ENCODE measurements at regions of chr7 and their contacts with region 1.

Region 1: DNA sequence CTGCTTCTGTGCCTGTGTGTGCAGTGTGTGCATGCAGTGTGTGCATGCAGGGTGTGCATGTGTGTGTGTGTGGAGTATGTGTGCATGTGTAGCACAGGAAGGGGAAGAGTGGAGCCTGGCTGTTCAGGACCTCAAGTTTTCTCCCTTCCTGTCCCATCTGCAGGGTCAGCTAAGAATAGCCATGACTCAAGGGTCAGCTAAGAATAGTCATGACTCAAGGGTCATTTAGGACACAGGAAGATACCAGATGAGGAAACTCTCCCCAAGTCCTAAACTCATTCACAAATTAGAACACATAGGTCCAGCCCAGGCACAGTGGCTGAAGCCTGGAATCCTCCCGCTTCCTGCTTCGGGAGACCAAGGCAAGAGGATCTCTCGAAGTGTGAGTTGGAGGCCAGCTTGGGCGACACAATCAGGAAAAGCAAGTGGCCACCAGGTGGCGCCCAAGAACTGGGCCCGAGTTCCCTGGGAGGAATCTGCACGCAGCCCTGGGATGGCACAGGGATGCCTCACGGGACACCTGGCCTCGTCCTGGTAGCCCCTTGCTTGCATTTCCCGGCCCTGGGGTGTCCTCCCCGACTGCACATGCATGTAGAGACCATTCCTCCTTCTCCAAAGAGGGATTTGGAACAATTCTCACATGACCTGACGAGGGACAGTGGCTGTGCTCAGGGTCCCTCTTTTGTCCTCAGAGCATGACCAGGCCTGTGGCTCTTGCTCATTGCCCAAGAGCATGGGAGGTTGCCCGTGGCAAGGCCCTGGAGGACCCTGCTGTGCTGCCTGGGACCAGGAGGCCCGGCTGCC is 21.4 kb upstream of the VOPP1 start:
- DNase-seq: peak; percentile 92
- H3K4me3 Mint-ChIP-seq: no peak overlapping the region
- H3K27ac Mint-ChIP-seq: no peak overlapping the region
- H3K4me1 Mint-ChIP-seq: no peaks in the 10 kb centered on the region
- H3K27me3 Mint-ChIP-seq: peaks cover 62% of the 10 kb centered on the region
- CTCF ChIP-seq: peak; percentile 96

Region 2: GRCh38 chr7:55280031-55280454 is 313.7 kb before region 1 on chr7:
- CTCF ChIA-PET with region 1: no interaction called
- intact Hi-C with region 1: loop called (anchors 1 kb)
- DNase-seq: peak; percentile 84
- H3K4me3 Mint-ChIP-seq: no peak overlapping the region
- H3K27ac Mint-ChIP-seq: no peak overlapping the region
- H3K4me1 Mint-ChIP-seq: no peaks in the 10 kb centered on the region
- H3K27me3 Mint-ChIP-seq: peaks cover 64% of the 10 kb centered on the region
- CTCF ChIP-seq: peak; percentile 89

Region 3: DNA sequence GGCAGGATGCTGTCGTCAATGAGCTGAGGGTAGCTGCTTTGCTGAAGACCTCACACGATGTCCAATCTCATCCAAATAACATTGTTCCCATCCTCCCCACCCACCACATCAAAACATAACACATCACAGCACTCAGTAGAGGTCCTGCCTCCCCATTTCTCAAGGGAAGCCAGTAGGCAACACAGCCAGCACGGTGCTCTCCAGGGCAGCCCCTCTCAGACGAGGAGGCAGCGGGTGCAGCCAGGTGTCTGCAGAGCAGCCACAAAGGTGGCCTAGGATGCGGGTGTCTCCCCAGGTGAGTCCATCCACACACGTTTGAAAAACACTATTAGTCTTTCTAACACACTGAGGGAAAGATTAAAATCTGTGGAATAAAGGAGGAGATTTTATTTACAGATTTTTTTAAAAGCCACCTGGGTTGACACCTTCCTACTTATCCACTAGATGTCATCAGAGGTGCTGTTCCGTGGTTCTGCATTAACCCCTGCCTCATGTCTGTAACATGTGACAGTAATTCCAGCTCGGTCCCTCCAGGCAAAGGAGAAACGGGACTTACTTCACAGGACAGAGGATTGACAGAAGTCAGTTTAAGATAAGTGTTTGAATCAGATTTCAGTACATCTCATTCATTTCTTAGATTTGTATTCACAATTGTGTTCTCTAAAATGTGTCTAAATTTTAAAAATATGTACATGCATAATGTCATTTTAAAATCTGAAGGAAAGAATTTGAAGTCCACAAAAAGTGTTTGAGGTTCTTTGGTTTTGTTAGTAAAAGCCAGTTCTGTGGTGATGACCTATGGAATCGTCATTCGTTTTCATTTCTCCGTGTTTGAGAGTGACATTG is 160.6 kb before region 1 on chr7:
- CTCF ChIA-PET with region 1: interaction called, 5 read pairs
- intact Hi-C with region 1: loop called (anchors 1 kb)
- DNase-seq: peak; percentile 51
- H3K4me3 Mint-ChIP-seq: no peak overlapping the region
- H3K27ac Mint-ChIP-seq: no peak overlapping the region
- H3K4me1 Mint-ChIP-seq: no peaks in the 10 kb centered on the region
- H3K27me3 Mint-ChIP-seq: no peaks in the 10 kb centered on the region
- CTCF ChIP-seq: peak; percentile 51

Region 4: DNA sequence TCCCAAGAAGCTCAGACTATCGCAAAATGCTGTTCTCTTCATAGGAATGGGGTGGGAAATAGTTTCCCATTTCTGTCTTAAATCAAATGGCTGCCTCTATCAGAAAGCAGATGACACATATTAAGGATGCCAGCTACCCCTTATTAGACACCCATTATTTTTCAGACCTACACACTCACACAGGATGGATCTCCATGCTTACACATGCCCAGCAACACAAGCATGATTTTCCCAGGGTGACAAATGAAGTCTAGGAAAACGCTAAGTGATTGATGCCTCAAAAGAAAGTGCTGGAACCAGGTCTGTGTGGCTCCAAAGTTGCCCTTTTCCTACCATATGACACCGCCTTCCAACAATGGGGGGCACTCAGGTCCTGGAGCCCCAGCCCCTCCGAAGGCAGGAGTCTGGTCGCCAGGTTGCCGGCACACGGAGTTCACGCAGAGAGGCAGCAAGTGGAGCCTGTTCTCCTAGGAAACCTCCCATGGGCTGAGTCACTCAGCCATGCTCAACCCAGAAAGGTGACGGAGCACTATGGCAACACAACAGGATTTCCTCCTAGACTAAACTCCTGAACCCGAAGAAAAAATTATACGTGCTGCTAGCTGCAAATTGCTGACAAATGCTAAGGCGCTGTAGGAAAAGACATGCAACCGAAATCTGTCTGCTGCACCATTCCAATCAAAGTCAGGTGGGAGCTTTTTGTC is 41.2 kb before region 1 on chr7:
- CTCF ChIA-PET with region 1: interaction called, 3 read pairs
- intact Hi-C with region 1: loop called (anchors 2 kb)
- DNase-seq: peak; percentile 85
- H3K4me3 Mint-ChIP-seq: peak overlapping the region; percentile 67
- H3K27ac Mint-ChIP-seq: peak overlapping the region; percentile 88
- H3K4me1 Mint-ChIP-seq: peaks cover 95% of the 10 kb centered on the region
- H3K27me3 Mint-ChIP-seq: no peaks in the 10 kb centered on the region
- CTCF ChIP-seq: no peak